ENCODE measurements at regions of chr12 and their contacts with region 1.

Region 1: GRCh38 chr12:32535288-32535999 is 136.1 kb downstream of the FGD4 start:
- DNase-seq: peak in 1 of 2 experiments; percentile 29
- H3K4me3 ChIP-seq: no peak overlapping the region
- H3K27ac ChIP-seq: no peak overlapping the region
- H3K4me1 ChIP-seq: peaks cover 11% of the 10 kb centered on the region; the same call in 1 of the 2 replicates
- H3K27me3 ChIP-seq: no peaks in the 10 kb centered on the region
- CTCF ChIP-seq: no peak

Region 2: DNA sequence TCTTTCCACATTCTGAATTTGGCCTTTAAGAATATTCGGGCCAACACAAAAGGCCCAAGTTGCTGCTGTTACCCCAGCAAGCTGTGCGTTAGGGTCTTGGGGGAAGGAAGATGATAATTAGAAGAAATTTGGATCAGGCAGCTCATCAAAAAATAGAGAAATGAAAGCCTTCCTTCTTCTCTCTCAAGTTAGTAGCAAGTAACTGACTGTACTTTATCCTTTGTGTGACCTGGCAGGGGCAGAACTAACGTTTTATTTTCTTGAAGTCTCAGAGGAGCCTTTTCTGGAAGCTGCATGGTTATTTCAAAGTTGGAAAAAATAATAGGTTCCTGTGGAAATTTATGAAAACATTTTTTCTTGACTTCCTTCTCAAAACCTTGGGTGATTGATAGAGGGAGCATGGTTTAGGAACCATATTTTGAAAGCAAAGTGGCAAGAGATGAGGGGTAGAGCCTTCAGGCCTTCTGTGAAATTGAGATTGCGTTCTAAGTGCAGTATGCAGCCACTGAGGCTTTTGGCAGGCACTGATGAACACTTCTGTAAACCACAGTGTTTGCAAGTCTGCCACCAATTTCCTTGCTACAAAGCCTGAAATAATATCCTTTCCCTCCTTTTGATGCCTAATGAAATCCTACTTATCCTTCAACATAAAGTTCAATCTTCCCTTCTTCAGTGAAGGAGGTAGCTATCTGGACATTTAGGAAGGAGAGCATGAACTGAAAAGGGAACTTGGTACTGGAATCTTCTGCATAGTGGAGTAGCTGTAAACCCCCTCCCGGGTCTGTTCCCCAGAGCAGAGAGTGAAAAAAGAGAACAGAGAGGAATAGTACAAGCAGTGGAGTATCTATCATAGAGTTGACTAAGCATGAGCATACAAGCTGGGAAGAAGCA is 12.9 kb before region 1 on chr12:
- CTCF ChIA-PET with region 1: no interaction called
- POLR2A ChIA-PET with region 1: interaction called, 16 read pairs
- intact Hi-C with region 1: no loop called
- DNase-seq: no peak
- H3K4me3 ChIP-seq: no peak overlapping the region
- H3K27ac ChIP-seq: no peak overlapping the region
- H3K4me1 ChIP-seq: no peaks in the 10 kb centered on the region
- H3K27me3 ChIP-seq: no peaks in the 10 kb centered on the region
- CTCF ChIP-seq: no peak

Measured in PC-9 (cell line).